GM10248 (cell line): ENCODE measurements at regions of chr5 and their contacts with region 1.

Region 1: GRCh38 chr5:36241631-36242533 is at the start of gene NADK2:
- DNase-seq: peak; percentile 95
- CTCF ChIP-seq: peak; percentile 58

Region 2: DNA sequence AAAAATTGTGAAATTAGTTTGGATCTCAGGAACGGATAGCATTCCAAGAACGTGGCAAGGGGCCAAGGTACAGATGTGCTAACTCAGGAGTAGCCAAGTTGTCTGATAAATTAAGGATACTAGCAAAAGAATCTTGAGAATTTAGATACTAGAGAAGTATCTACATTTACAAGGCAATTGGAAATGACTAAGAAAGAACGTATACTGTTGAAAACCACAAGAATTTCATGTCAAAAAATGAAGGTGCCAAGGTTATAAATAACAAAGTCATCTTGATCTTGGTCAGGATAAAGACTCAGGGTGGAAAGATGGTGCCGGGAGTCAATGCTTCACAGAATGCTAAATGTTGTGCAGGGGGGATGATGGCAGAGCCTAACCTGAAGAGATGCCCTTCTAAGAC is 322.7 kb before region 1 on chr5:
- CTCF ChIA-PET with region 1: no interaction called
- POLR2A ChIA-PET with region 1: no interaction called
- DNase-seq: no peak
- CTCF ChIP-seq: no peak

Region 3: GRCh38 chr5:36089989-36090564 is 151.8 kb before region 1 on chr5:
- CTCF ChIA-PET with region 1: no interaction called
- POLR2A ChIA-PET with region 1: no interaction called
- DNase-seq: no peak
- CTCF ChIP-seq: no peak

Region 4: DNA sequence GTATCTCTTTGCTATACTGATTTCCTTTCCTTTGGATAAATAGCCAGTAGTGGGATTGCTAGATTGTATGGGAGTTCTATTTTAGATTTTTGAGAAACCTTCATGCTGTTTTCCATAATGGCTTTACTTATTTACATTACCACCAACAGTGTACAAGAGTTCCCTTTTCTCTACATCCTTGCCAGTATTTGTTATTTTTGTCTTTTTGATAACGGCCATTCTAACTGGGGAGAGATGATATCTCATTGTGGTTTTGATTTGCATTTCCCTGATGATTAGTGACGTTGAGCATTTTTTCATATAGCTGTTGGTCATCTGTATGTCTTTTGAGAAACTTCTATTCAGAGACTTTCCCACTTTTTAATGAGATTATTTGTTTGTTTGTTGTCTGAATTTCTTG is 26.0 kb before region 1 on chr5:
- CTCF ChIA-PET with region 1: interaction called, 39 read pairs
- POLR2A ChIA-PET with region 1: no interaction called
- DNase-seq: no peak
- CTCF ChIP-seq: no peak

Region 5: DNA sequence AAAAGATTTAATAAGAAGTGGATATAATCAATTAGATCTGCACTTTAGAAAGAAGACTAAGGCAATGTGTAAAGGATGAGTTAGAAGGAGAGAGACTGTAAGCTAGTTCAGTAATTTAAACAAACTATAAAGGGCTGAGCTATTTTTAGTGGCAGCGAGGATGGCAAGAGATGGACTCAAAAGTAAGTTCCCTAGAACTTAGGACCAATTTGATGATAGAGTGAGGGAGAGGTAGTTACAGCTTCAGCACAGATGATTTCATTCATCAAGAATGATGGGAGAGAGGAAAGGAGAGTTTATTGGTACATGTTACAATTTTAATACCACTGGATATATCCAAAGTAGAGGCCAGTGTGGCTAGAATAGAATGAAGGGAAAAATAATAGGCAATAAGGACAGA is 19.3 kb before region 1 on chr5:
- CTCF ChIA-PET with region 1: interaction called, 39 read pairs
- POLR2A ChIA-PET with region 1: no interaction called
- DNase-seq: no peak
- CTCF ChIP-seq: no peak

Region 6: DNA sequence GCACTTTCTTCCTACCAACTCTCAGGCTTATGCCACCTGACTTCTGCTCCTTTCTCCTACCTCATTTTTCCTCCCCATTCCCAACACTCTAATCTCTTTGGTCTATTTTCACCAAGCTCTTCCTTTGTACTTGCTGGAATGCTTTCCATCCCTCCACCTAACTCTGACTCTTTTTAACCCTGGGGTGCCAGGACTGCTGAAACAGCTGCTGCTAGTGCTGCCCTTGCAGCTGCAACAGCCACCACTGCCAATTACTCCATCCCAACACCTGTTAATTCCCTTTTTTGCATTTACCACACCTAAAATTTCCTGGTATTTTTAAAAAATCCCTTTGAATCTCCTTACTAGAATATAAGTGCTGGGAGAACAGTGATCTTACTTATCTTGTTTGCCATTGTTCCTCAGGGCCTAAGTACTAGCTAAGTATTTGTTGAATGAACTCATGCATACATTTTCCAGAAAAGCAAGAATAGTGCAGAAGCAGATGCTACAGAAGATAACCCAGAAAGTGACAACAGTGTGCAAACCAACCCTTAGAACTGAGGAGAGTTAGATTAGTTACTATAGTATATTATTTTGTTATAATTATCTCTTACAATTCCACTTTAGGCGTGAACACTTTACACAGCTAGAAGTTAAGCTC is 11.6 kb before region 1 on chr5:
- CTCF ChIA-PET with region 1: interaction called, 26 read pairs
- POLR2A ChIA-PET with region 1: no interaction called
- DNase-seq: no peak
- CTCF ChIP-seq: no peak

Region 7: GRCh38 chr5:36252722-36253365 is 11.0 kb after region 1 on chr5:
- CTCF ChIA-PET with region 1: interaction called, 24 read pairs
- POLR2A ChIA-PET with region 1: interaction called, 3 read pairs
- DNase-seq: no peak
- CTCF ChIP-seq: no peak

Region 8: DNA sequence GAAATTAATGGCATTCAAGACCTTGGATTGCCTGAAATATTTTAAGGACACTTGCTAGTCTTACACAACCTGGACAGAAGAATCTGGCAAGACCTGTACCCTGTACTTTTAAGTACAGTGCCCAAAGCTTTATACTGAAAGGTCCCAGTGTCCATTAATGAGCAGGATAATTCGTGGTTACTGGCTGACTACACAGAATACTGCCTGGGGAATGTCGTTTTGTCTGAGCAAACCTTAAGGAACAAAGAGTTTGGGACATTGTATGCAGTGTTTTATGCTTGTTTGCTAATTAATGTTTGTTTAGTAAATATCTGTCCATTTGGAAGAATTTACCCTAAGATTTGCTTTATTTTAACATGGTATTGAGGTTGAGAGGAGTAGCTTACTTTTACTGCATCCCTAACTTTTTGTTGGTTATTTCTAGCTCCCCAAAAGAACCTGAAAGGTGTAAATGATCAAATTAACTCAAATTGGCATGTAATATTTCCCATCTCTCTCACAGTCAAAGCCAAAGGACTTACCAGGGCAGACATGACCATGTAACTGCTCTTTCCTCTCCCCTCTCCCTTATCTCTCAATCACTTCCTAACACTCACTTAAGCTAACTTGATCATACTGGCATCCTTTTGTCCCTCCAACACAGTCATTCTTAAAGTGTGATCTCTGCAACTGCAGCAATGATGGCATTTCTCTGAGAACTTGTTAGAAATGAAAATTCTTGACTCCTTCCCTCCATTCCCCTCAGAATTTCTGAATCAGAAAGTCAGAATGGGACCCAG is 44.1 kb after region 1 on chr5:
- CTCF ChIA-PET with region 1: no interaction called
- POLR2A ChIA-PET with region 1: no interaction called
- DNase-seq: no peak
- CTCF ChIP-seq: no peak